Natural killer cell (primary cell): ENCODE measurements at regions of chr17 and their contacts with region 1.

Region 1: DNA sequence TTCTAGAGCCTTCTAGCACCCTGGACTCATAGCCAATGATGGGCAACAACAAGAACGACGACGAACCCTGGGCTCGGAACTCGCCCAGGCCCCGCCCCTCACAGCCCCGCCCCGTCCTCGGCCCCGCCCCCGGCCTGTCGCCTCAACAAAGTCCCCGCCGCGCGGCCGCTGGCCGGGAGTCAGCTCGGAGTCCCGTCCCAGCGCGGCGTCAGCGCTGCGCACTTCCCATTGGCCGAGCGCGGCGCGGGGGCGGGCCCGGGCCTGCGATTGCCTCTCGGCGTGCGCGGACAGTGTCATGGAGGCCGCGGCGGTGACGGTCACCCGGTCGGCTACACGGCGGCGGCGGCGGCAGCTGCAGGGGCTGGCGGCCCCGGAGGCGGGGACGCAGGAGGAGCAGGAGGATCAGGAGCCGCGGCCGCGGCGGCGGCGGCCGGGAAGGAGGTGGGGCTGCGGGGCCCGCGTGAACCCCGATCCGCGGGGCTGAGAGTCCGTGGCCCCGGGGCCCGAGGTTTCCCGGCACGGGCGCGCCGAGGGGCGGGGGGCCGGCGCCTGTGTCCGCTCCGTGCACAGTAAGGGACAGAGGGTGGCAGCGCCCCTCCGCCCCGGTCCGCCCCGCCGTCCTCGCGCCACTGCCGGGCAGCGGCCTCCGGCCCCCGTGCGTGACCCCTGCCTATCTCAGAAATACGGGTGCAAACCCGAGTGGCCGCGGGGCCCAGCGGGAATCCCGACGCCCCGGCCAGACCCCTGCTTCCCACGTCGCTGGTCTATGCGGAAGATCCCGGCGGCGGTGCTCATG is at the start of gene ENGASE:
- DNase-seq: peak; percentile 93 to 95
- ATAC-seq: peak; percentile 95 to 98 (median 95)
- H3K4me3 ChIP-seq: peak within 1 kb of the TSS; percentile 38
- H3K4me3 Mint-ChIP-seq: peak within 1 kb of the TSS; percentile 88
- H3K27ac ChIP-seq: peak within 1 kb of the TSS; percentile 54
- H3K27ac Mint-ChIP-seq: peak within 1 kb of the TSS; percentile 75 to 91
- H3K4me1 ChIP-seq: peaks cover 23% of the 10 kb centered on the region
- H3K4me1 Mint-ChIP-seq: peaks cover 10 to 21% of the 10 kb centered on the region in 2 donors
- H3K27me3 ChIP-seq: no peaks in the 10 kb centered on the region
- H3K27me3 Mint-ChIP-seq: peaks cover 0 to 3% of the 10 kb centered on the region in 2 donors
- CTCF ChIP-seq: no peak
- total RNA-seq, gene ENGASE: 56.0 to 86.4 (median 56.9) TPM

Region 2: GRCh38 chr17:78541488-78542237 is 533.2 kb before region 1 on chr17:
- intact Hi-C with region 1: no loop called
- DNase-seq: no peak
- ATAC-seq: peak in 1 of 3 donors; percentile 41
- H3K4me3 ChIP-seq: no peak overlapping the region
- H3K4me3 Mint-ChIP-seq: no peak overlapping the region
- H3K27ac ChIP-seq: no peak overlapping the region
- H3K27ac Mint-ChIP-seq: no peak overlapping the region
- H3K4me1 ChIP-seq: no peaks in the 10 kb centered on the region
- H3K4me1 Mint-ChIP-seq: no peaks in the 10 kb centered on the region
- H3K27me3 ChIP-seq: no peaks in the 10 kb centered on the region
- H3K27me3 Mint-ChIP-seq: peaks cover 0 to 4% of the 10 kb centered on the region in 2 donors
- CTCF ChIP-seq: no peak

Region 3: GRCh38 chr17:79009397-79010308 is 65.2 kb before region 1 on chr17 and contains the start of gene CANT1:
- intact Hi-C with region 1: loop called (anchors 1 kb)
- DNase-seq: peak; percentile 84 to 93
- ATAC-seq: peak; percentile 94 to 98 (median 97)
- H3K4me3 ChIP-seq: peak within 1 kb of the TSS; percentile 93
- H3K4me3 Mint-ChIP-seq: peak within 1 kb of the TSS; percentile 93
- H3K27ac ChIP-seq: peak within 1 kb of the TSS; percentile 69
- H3K27ac Mint-ChIP-seq: peak within 1 kb of the TSS; percentile 90 to 98
- H3K4me1 ChIP-seq: peaks cover 48% of the 10 kb centered on the region
- H3K4me1 Mint-ChIP-seq: peaks cover 37 to 48% of the 10 kb centered on the region in 2 donors
- H3K27me3 ChIP-seq: no peaks in the 10 kb centered on the region
- H3K27me3 Mint-ChIP-seq: peaks cover 7 to 9% of the 10 kb centered on the region in 2 donors
- CTCF ChIP-seq: no peak
- total RNA-seq, gene CANT1: 40.0 to 58.8 (median 53.4) TPM

Region 4: DNA sequence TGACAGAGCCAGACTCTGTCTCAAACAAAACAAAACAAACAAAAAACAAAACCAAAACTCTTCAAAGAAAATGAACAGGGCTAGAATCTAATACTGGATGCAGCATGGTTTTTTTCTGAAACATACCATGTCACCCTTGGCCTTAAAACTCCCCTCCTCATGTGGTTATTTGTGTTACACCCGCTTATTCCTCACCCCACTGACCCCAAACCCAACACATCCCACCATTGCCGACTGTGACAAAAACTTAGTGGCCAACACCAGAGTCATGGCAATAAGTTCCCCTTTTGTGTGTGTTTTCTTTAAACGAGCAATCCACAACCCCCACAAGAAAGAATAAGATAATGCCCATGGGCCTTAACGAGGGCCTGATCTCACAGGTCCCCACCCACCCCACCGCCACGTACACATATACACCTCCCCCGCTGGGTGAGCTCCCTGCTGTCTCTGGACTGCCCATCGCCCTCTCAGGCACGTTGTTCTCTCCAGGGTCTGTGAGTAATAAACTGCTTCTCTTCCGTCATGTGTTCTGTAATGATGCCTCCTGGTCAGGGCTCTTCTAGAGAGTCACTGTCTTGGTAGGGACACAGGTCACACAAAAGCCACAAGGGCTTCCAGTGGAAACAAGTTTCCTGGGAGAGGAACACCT is 17.0 kb before region 1 on chr17:
- intact Hi-C with region 1: loop called (anchors 2 kb)
- DNase-seq: peak in 1 of 2 donors; percentile 61
- ATAC-seq: peak; percentile 75 to 84 (median 83)
- H3K4me3 ChIP-seq: no peak overlapping the region
- H3K4me3 Mint-ChIP-seq: peak overlapping the region; percentile 52
- H3K27ac ChIP-seq: no peak overlapping the region
- H3K27ac Mint-ChIP-seq: peak overlapping the region; percentile 58 to 88
- H3K4me1 ChIP-seq: peaks cover 31% of the 10 kb centered on the region
- H3K4me1 Mint-ChIP-seq: peaks cover 15 to 25% of the 10 kb centered on the region in 2 donors
- H3K27me3 ChIP-seq: no peaks in the 10 kb centered on the region
- H3K27me3 Mint-ChIP-seq: peaks cover 0 to 11% of the 10 kb centered on the region in 2 donors
- CTCF ChIP-seq: no peak